ENCODE measurements at regions of chr12 and their contacts with region 1.

Region 1: DNA sequence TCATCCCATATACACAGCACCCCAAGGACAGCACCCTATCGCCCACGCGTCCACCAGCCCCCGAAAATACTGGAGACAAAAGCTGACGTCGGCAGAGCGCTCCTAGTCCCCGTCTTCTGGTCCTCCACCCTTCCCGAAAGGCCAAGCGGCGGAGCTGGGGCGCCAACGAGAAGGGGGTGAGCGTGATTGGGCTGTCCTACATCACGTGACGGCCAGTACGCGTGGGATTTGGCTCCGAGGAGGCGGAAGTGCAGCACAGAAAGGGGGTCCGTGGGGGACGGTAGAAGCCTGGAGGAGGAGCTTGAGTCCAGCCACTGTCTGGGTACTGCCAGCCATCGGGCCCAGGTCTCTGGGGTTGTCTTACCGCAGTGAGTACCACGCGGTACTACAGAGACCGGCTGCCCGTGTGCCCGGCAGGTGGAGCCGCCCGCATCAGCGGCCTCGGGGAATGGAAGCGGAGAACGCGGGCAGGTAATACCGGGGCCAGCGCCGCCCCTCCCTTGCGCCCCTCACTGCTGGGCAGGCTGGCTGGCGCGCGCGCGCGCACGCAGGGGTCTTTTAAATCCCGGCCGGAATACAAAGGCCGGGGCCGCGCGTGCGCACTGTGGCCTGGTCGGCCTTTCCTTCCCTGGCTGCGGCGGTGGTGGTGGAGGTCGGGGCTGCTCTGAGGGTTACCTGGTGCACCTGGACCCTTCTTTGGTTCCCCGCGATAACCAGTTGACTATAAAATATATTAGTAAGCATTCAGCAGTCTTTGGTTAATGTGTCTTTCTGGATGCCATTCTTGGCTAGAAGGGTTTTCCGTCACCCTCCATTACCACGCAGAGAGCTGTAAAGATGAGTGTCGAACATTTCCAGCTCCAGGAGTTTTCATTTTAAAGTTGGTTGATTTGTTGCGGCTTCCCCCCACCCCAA is at the start of gene TDG:
- DNase-seq: peak; percentile 98
- H3K4me3 Mint-ChIP-seq: peak within 1 kb of the TSS; percentile 92
- H3K27ac Mint-ChIP-seq: peak within 1 kb of the TSS; percentile 97
- H3K4me1 Mint-ChIP-seq: peaks cover 28% of the 10 kb centered on the region
- H3K27me3 Mint-ChIP-seq: no peaks in the 10 kb centered on the region
- CTCF ChIP-seq: peak; percentile 28
- total RNA-seq, gene TDG: 31.6 and 31.8 TPM in 2 replicates

Region 2: GRCh38 chr12:103334466-103334865 is 631.4 kb before region 1 on chr12:
- CTCF ChIA-PET with region 1: no interaction called
- POLR2A ChIA-PET with region 1: no interaction called
- intact Hi-C with region 1: no loop called
- DNase-seq: no peak
- H3K4me3 Mint-ChIP-seq: no peak overlapping the region
- H3K27ac Mint-ChIP-seq: no peak overlapping the region
- H3K4me1 Mint-ChIP-seq: no peaks in the 10 kb centered on the region
- H3K27me3 Mint-ChIP-seq: no peaks in the 10 kb centered on the region
- CTCF ChIP-seq: no peak

Region 3: DNA sequence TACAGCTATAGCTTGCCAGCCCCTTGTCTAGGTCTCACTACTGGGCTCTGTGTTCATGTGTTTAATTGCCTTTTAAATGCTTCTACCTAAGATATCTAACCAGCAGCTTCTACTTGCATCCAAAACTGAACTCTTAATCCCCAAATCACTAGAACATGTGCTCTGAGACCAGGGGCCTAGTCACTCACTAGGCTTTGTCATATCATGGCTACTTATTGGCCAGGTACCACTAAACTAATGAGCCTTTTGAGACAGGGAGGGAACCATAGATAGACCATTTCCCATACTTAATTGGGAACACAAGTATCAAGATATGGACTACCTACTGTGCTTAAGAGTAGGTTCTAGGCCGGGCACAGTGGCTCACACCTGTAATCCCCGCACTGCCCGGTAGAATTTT is 29.2 kb before region 1 on chr12:
- CTCF ChIA-PET with region 1: interaction called, 3 read pairs
- POLR2A ChIA-PET with region 1: interaction called, 97 read pairs
- intact Hi-C with region 1: no loop called
- DNase-seq: no peak
- H3K4me3 Mint-ChIP-seq: no peak overlapping the region
- H3K27ac Mint-ChIP-seq: no peak overlapping the region
- H3K4me1 Mint-ChIP-seq: peaks cover 30% of the 10 kb centered on the region
- H3K27me3 Mint-ChIP-seq: no peaks in the 10 kb centered on the region
- CTCF ChIP-seq: no peak

Region 4: DNA sequence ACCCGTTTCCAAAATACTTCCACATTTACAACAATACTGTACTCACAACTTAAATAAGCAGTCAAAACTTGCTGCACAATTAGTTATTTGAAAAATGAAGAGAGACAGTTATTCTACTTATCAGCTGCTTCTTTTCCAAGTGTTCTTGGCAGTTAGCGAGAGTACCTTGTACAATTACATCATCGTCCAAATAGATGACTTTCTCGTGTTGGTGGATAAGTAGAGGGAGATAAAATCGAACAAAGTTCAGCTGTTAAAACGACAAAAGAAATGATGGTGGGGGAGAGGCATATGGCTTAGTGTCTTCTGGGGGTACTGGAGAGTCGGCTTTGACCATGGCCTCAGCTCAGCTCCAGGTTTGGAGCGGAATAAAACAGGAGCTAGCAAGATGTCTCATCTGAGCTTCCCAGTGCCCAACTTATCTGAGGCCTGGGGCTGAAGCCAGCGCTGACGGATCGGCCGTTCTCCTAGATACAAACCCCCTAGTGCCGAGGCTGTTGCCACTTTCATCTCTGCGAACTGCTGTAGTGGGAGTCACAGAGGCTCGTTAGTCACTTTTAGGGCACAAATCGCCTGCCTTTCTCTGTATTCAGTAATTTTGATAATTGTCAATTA is 31.5 kb after region 1 on chr12:
- CTCF ChIA-PET with region 1: interaction called, 4 read pairs
- POLR2A ChIA-PET with region 1: interaction called, 15 read pairs
- intact Hi-C with region 1: no loop called
- DNase-seq: no peak
- H3K4me3 Mint-ChIP-seq: no peak overlapping the region
- H3K27ac Mint-ChIP-seq: no peak overlapping the region
- H3K4me1 Mint-ChIP-seq: no peaks in the 10 kb centered on the region
- H3K27me3 Mint-ChIP-seq: no peaks in the 10 kb centered on the region
- CTCF ChIP-seq: no peak

Region 5: DNA sequence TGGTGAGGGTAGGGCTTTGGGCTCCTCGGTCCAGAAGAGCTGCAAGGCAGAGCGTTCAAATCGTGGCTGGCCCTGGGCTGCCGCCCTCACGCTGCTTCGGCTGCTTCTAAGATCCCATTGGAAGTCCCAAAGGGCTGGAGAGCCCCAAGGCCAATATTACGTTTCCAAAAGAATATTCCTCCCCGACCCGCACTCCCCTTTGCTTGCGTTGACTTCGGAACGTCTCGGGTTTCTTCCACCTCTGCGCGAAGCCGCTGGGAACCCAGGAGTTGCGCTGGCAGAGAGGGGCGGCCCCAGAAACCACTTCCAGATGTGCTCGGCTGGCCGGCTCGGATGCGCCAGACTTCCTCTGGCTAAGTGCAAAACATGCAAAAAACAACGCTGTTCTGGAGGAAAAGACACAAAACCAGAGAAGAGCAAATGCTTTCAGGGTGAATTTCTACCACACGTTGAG is 84.1 kb after region 1 on chr12 and contains the start of gene GLT8D2:
- CTCF ChIA-PET with region 1: interaction called, 3 read pairs
- POLR2A ChIA-PET with region 1: interaction called, 16 read pairs
- intact Hi-C with region 1: no loop called
- DNase-seq: peak; percentile 52
- H3K4me3 Mint-ChIP-seq: peak within 1 kb of the TSS; percentile 68
- H3K27ac Mint-ChIP-seq: no peak within 1 kb of the TSS
- H3K4me1 Mint-ChIP-seq: peaks cover 18% of the 10 kb centered on the region
- H3K27me3 Mint-ChIP-seq: no peaks in the 10 kb centered on the region
- CTCF ChIP-seq: no peak
- total RNA-seq, gene GLT8D2: 0.79 and 2.0 TPM in 2 replicates

Region 6: DNA sequence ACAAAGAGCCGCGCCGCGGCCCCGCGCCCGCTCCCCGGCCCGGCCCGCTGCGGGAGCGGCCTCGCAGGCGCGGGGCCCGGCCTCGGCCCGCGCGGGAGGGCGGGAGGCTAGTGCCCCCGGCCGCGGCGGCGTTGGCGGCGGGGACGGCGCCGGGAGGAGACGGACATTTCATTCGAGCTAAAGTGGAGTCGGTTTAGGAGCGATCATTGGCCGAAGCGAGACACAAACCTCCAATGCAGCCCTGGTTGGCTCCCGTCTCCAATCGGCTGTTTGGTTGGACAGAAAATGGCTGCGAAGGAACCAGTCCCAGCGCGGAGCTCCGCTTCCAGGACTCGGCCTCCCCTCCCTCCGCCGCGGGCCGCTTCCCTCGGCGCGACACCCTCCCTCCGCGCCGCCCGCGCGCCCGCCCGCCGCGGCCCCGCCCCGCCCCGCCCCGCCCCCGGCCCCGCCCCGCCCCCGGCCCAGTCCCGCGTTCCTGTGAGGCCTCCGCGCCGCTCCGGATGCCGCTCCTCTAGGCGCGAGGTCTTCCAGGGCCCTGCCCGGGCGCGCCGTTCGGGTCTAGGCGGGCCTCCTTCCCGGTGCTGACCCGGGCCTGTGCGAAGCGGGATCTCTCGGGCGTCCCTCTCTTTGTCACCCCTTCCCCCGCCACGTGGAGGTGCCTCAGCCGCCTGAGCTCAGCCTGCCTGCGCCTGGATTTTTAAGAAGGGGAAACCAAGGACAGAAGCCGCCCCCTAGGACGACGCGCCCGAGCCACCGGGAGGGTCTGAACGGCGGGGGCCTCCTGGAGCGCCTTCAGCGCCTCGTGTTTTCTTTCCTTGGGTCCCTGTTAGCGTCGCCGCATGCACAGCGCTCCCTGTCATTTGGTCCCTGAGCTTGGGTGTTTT is 172.3 kb after region 1 on chr12 and contains the start of gene NFYB:
- CTCF ChIA-PET with region 1: interaction called, 4 read pairs
- POLR2A ChIA-PET with region 1: interaction called, 16 read pairs
- intact Hi-C with region 1: no loop called
- DNase-seq: peak; percentile 99
- H3K4me3 Mint-ChIP-seq: peak within 1 kb of the TSS; percentile 78
- H3K27ac Mint-ChIP-seq: peak within 1 kb of the TSS; percentile 46
- H3K4me1 Mint-ChIP-seq: peaks cover 8% of the 10 kb centered on the region
- H3K27me3 Mint-ChIP-seq: no peaks in the 10 kb centered on the region
- CTCF ChIP-seq: no peak
- total RNA-seq, gene NFYB: 24.8 and 27.0 TPM in 2 replicates

Region 7: DNA sequence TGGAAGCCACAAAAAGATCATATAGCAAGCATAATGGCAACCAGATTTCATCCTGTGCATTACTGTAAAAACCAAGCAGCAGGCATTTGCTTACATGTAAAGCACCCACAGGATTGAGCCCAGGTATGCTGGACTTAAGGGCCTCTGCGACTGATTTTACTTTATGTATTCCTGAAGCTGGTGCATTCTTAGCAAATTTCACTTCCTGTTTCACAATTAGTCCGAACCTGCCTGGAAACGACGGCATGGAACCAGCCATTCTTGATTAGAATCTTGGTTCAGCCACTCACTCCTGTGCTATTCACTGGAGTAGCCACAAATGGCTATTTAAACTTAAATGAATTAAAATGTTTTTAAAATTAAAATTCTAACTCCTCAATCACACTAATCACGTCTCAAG is 1933.7 kb after region 1 on chr12:
- CTCF ChIA-PET with region 1: no interaction called
- POLR2A ChIA-PET with region 1: no interaction called
- intact Hi-C with region 1: no loop called
- DNase-seq: no peak
- H3K4me3 Mint-ChIP-seq: no peak overlapping the region
- H3K27ac Mint-ChIP-seq: no peak overlapping the region
- H3K4me1 Mint-ChIP-seq: no peaks in the 10 kb centered on the region
- H3K27me3 Mint-ChIP-seq: no peaks in the 10 kb centered on the region
- CTCF ChIP-seq: no peak

Measured in MCF 10A (cell line).